Pancreas (tissue), 10 donors: ENCODE measurements at regions of chr3 and their contacts with region 1.

Region 1: GRCh38 chr3:23800731-23801130 is 5.0 kb upstream of the UBE2E1 start:
- DNase-seq: no peak
- ATAC-seq: peak in 2 of 4 donors; percentile 34 to 45
- H3K4me3 ChIP-seq: no peak overlapping the region
- H3K27ac ChIP-seq: no peak overlapping the region
- H3K4me1 ChIP-seq: no peaks in the 10 kb centered on the region
- H3K27me3 ChIP-seq: no peaks in the 10 kb centered on the region
- CTCF ChIP-seq: no peak

Region 2: DNA sequence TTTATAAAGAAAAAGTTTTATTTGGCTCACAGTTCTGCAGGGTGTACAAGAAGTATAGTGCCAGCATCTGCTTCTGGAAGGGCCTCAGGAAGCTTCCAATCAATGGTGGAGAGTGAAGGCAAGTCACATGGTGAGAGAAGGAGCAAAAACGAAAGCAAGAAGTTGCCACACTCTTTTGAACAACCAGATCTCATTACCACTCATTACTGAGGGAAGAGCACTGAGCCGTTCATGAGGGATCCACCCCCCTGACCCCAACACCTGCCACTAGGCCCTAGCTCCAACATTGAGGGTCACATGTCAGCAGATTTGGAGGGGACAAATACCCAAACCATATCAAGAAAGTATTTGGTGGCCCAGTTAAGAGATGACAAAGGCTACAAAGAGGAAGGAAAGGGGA is 234.2 kb before region 1 on chr3:
- intact Hi-C with region 1: no loop called
- DNase-seq: no peak
- ATAC-seq: no peak
- H3K4me3 ChIP-seq: no peak overlapping the region
- H3K27ac ChIP-seq: no peak overlapping the region
- H3K4me1 ChIP-seq: no peaks in the 10 kb centered on the region
- H3K27me3 ChIP-seq: no peaks in the 10 kb centered on the region
- CTCF ChIP-seq: no peak

Region 3: DNA sequence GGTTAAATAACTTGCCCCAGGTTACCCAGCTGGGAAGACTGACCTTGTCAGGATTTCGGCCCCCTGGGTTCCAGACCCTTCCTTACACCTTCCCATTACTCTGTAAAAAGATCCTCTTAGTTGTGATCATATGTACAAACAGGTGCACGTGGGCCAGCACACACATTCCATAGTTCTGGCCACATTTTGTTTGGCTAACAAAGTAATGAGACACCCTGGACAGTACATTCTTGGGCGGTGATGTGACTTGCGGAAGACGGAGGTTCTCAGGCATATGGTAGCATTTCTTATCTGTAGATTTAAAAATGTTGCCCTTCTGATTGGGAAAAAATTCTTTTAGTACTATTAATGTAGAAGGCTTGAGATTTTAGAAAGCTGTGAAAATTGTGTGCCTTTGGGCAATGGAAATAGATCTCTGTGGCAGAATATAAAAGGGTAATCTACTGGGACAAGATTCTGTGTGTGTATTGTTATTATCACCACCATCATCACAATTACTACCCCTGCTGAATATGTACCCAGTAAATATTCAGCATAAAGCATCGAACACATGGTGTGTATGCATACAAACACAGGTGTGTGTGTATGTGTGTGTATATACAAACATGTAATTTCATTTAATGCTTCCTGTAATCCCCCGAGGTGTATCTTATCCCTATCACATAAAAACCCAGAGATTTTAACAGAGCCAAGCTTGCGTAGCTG is 200.4 kb before region 1 on chr3:
- intact Hi-C with region 1: no loop called
- DNase-seq: no peak
- ATAC-seq: peak in 1 of 4 donors; percentile 56
- H3K4me3 ChIP-seq: no peak overlapping the region
- H3K27ac ChIP-seq: no peak overlapping the region
- H3K4me1 ChIP-seq: no peaks in the 10 kb centered on the region
- H3K27me3 ChIP-seq: no peaks in the 10 kb centered on the region
- CTCF ChIP-seq: no peak

Region 4: GRCh38 chr3:23712656-23713559 is 87.8 kb before region 1 on chr3:
- intact Hi-C with region 1: loop called in 1 of 3 experiments (anchors 5 kb)
- DNase-seq: peak in 3 of 6 donors; percentile 4 to 32 (median 22)
- ATAC-seq: peak in 3 of 4 donors; percentile 71 to 77 (median 74)
- H3K4me3 ChIP-seq: no peak overlapping the region
- H3K27ac ChIP-seq: no peak overlapping the region
- H3K4me1 ChIP-seq: no peaks in the 10 kb centered on the region
- H3K27me3 ChIP-seq: peaks cover 0 to 4% (median 0%) of the 10 kb centered on the region in 4 donors
- CTCF ChIP-seq: no peak